PC-3 (cell line): ENCODE measurements at regions of chr7 and their contacts with region 1.

Region 1: GRCh38 chr7:28573059-28573553 is 160.8 kb downstream of the CREB5 start:
- DNase-seq: peak; percentile 88
- ATAC-seq: peak; percentile 66
- H3K4me3 ChIP-seq: no peak overlapping the region; the same call in 1 of the 2 replicates
- H3K27ac ChIP-seq: peak overlapping the region; percentile 15
- H3K4me1 ChIP-seq: peaks cover 46% of the 10 kb centered on the region
- H3K27me3 ChIP-seq: no peaks in the 10 kb centered on the region; the same call in 1 of the 2 replicates
- CTCF ChIP-seq: no peak

Region 2: GRCh38 chr7:28258240-28258639 is 314.9 kb before region 1 on chr7:
- CTCF ChIA-PET with region 1: no interaction called
- POLR2A ChIA-PET with region 1: no interaction called
- intact Hi-C with region 1: no loop called
- DNase-seq: no peak
- ATAC-seq: no peak
- H3K4me3 ChIP-seq: no peak overlapping the region
- H3K27ac ChIP-seq: no peak overlapping the region
- H3K4me1 ChIP-seq: no peaks in the 10 kb centered on the region
- H3K27me3 ChIP-seq: peaks cover 20% of the 10 kb centered on the region; the same call in 1 of the 2 replicates
- CTCF ChIP-seq: no peak

Region 3: GRCh38 chr7:28419717-28420116 is 153.4 kb before region 1 on chr7:
- CTCF ChIA-PET with region 1: no interaction called
- POLR2A ChIA-PET with region 1: no interaction called
- intact Hi-C with region 1: no loop called
- DNase-seq: peak; percentile 30
- ATAC-seq: no peak
- H3K4me3 ChIP-seq: no peak overlapping the region
- H3K27ac ChIP-seq: no peak overlapping the region
- H3K4me1 ChIP-seq: no peaks in the 10 kb centered on the region
- H3K27me3 ChIP-seq: no peaks in the 10 kb centered on the region
- CTCF ChIP-seq: no peak

Region 4: GRCh38 chr7:28613262-28613661 is 40.2 kb after region 1 on chr7:
- CTCF ChIA-PET with region 1: interaction called, 3 read pairs
- POLR2A ChIA-PET with region 1: no interaction called
- intact Hi-C with region 1: loop called (anchors 5 kb)
- DNase-seq: peak; percentile 22
- ATAC-seq: no peak
- H3K4me3 ChIP-seq: no peak overlapping the region
- H3K27ac ChIP-seq: no peak overlapping the region
- H3K4me1 ChIP-seq: peaks cover 35% of the 10 kb centered on the region
- H3K27me3 ChIP-seq: no peaks in the 10 kb centered on the region
- CTCF ChIP-seq: no peak

Region 5: DNA sequence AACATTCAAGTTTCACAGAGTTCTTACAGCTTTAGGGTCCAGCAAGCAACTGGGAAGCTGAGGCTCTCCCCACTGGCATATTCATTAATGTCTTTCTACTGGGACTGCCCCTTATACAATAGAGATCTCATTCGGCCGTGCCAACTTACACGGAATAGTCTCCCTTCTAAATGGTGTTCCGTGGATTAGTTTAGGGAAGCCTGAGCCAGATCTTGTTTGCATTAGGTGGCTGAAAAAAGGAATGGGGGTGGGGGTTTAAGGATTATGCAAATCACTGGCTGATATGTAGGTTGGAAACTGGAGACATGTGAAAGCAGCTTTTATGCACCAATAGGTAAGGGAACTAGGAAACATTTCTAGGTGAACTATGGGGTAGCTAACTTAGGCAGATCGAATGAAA is 166.7 kb after region 1 on chr7:
- CTCF ChIA-PET with region 1: no interaction called
- POLR2A ChIA-PET with region 1: interaction called, 11 read pairs
- intact Hi-C with region 1: no loop called
- DNase-seq: no peak
- ATAC-seq: no peak
- H3K4me3 ChIP-seq: no peak overlapping the region
- H3K27ac ChIP-seq: no peak overlapping the region
- H3K4me1 ChIP-seq: no peaks in the 10 kb centered on the region
- H3K27me3 ChIP-seq: no peaks in the 10 kb centered on the region
- CTCF ChIP-seq: no peak